Ovary (tissue), 10 donors: ENCODE measurements at regions of chr7 and their contacts with region 1.

Region 1: DNA sequence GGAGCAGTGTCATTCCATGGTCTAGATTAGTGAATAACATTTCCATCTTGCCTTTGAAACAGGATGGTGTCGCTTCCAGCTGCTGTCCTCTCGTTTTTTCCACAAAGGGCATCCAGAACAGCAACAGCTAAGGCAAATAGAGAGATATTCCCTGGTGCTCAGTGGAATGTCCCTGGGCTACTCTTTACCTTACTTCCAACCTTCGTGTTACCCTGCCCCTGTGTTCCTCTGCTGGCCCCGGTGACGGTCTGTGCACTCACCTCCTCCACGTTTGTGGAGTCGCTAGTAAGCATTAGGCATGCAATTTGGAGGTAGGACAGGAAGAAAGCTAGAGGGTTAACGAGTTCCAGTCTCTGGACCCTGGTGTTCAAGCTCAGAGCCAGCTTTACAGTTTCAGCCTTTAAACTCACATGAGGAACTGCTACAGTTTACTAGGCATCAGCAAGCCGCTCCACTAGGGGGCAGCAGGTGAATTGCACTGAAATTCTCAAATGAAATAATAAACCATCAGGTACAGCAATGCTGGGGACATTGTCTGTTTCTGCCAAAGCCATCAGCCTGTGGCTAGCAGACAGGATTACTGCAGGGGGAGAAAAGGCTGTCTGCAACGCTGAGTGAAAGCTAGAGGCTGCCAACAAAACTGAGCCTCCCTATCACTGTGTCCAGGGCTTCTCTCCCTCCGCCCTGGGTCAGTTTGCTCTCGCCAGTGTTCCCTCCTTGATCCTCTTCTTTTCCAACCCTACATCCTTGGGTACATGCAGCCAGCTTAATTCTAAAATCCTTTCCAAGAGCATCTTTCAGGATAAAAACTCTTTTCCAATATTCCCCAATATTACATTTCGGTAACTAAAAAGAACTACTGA is 9.0 kb downstream of the MRPL32 start:
- DNase-seq: peak; percentile 80 to 89 (median 86)
- H3K4me3 ChIP-seq: no peak overlapping the region
- H3K27ac ChIP-seq: no peak overlapping the region
- H3K4me1 ChIP-seq: no peaks in the 10 kb centered on the region
- H3K27me3 ChIP-seq: no peaks in the 10 kb centered on the region
- CTCF ChIP-seq: peak; percentile 59 to 71 (median 70)
- EP300 ChIP-seq: no peak
- POLR2A ChIP-seq: no peak

Region 2: GRCh38 chr7:42567051-42567450 is 374.2 kb before region 1 on chr7:
- intact Hi-C with region 1: no loop called
- DNase-seq: no peak
- H3K4me3 ChIP-seq: no peak overlapping the region
- H3K27ac ChIP-seq: no peak overlapping the region
- H3K4me1 ChIP-seq: no peaks in the 10 kb centered on the region
- H3K27me3 ChIP-seq: no peaks in the 10 kb centered on the region
- CTCF ChIP-seq: no peak
- EP300 ChIP-seq: no peak
- POLR2A ChIP-seq: no peak

Region 3: DNA sequence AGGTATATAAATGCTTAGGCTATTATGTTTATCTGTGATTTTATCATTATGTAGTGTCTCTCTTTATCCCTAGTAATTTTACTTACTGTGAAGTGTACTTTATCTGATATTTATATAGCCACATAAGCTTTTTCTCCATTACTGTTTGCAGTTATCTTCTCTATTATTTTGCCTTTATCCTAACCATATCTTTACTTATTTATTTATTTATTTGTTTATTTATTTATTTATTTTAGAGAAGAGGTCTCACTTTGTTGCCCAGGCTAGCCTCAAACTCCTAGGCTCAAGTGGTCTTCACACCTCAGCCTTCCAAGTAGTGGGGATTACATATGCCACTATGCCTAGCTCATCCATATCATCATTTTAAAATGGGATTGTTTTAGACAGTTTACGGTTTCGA is 361.2 kb before region 1 on chr7:
- intact Hi-C with region 1: no loop called
- DNase-seq: no peak
- H3K4me3 ChIP-seq: no peak overlapping the region
- H3K27ac ChIP-seq: no peak overlapping the region
- H3K4me1 ChIP-seq: no peaks in the 10 kb centered on the region
- H3K27me3 ChIP-seq: no peaks in the 10 kb centered on the region
- CTCF ChIP-seq: no peak
- EP300 ChIP-seq: no peak
- POLR2A ChIP-seq: no peak

Region 4: GRCh38 chr7:42993038-42993437 is 51.8 kb after region 1 on chr7:
- intact Hi-C with region 1: no loop called
- DNase-seq: no peak
- H3K4me3 ChIP-seq: no peak overlapping the region
- H3K27ac ChIP-seq: no peak overlapping the region
- H3K4me1 ChIP-seq: no peaks in the 10 kb centered on the region
- H3K27me3 ChIP-seq: no peaks in the 10 kb centered on the region
- CTCF ChIP-seq: no peak
- EP300 ChIP-seq: no peak
- POLR2A ChIP-seq: no peak

Region 5: DNA sequence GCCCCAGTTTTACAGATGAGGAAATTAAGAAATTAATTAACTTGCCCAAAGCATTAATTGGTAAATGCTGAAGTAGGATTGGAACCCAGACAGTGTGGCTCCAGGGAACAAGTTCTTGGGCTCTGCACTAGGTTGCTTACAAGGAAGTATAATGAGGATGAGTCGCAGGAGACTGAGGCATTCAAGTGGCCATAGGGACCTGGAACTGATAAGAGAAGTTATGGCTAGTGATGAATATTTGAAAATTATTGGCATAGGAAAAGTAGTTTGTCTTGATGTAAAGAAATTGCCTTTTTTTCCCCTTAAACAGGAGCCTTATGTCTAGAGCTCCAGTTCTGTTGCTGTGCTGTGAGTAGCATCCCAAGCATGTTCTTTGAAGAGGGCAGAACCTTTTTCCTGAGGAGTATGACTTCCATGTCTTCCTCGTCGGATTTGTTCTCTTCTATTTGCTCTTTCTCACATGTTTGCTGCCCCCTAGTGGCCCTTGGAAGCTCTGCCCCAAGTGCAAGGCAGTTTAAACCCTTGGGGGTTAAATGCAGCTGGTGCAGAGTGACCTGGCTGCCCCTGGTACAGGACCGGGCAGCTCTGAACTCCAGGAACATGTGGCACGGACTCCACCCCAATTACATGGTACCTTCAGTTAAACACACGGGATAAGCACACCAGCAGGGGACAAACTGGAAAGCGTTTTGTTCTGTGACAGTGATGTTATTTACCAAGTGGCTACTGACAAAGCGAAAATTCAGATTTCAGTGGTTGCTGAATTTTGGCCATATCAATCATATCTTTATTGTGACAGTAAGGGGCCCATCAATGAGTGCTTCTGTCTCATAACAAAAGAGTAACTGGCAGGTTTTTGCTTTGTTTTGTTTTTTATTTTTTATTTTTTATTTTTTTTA is 320.0 kb after region 1 on chr7:
- intact Hi-C with region 1: loop called in 3 of 4 experiments (anchors 5 to 10 kb)
- DNase-seq: peak; percentile 61 to 76 (median 70)
- H3K4me3 ChIP-seq: no peak overlapping the region
- H3K27ac ChIP-seq: no peak overlapping the region
- H3K4me1 ChIP-seq: peaks cover 3% of the 10 kb centered on the region
- H3K27me3 ChIP-seq: no peaks in the 10 kb centered on the region
- CTCF ChIP-seq: peak; percentile 42 to 73 (median 71)
- EP300 ChIP-seq: no peak
- POLR2A ChIP-seq: no peak

Region 6: DNA sequence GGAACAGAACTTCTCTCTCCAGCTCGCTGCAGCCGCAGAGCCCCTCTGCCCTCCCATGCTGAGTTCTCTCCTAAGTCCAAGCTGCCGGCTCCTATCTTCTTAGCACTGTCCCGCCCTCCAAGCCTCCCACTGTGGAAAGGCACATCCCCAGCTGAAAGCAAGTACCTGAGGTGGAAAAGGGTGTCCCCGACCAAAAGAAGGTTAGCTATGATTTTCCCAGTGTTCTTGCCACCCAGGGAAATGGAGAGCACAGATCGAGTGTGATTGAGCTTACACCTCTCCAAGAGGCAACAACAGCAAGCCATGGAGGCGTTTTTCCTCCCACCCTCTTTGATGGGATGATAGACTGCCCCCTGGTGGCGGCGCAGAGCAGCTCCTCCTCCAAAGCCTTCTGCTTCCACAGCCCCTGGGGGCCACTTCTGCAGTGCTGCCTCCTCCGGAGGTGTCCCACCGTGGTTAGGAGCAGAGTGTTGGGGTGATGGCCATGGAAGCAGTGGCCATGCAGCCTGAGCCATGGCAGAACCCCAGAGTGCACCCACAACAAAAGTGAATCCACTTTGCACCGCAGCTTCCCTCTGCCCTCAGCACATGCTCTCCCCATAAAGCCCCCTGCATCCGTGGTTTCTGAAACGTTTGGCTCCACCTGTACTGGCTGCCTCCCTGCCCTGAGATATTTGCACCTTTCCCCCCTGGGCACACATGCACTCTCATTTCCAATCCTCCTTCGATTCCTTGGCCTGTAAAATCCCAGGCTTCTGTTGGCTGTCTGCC is 498.6 kb after region 1 on chr7:
- intact Hi-C with region 1: loop called in 1 of 4 experiments (anchors 10 kb)
- DNase-seq: no peak
- H3K4me3 ChIP-seq: no peak overlapping the region
- H3K27ac ChIP-seq: no peak overlapping the region
- H3K4me1 ChIP-seq: no peaks in the 10 kb centered on the region
- H3K27me3 ChIP-seq: no peaks in the 10 kb centered on the region
- CTCF ChIP-seq: no peak
- EP300 ChIP-seq: no peak
- POLR2A ChIP-seq: no peak

Region 7: GRCh38 chr7:43711503-43711902 is 770.3 kb after region 1 on chr7:
- intact Hi-C with region 1: loop called in 1 of 4 experiments (anchors 10 kb)
- DNase-seq: no peak
- H3K4me3 ChIP-seq: no peak overlapping the region
- H3K27ac ChIP-seq: no peak overlapping the region
- H3K4me1 ChIP-seq: peaks cover 1% of the 10 kb centered on the region
- H3K27me3 ChIP-seq: no peaks in the 10 kb centered on the region
- CTCF ChIP-seq: no peak
- EP300 ChIP-seq: no peak
- POLR2A ChIP-seq: no peak